Activated B cell treated with CpG ODN at 0.5 μM for 24 hours (primary cell): ENCODE measurements at regions of chr2 and their contacts with region 1.

Region 1: GRCh38 chr2:219177552-219178376 is at the start of gene RETREG2:
- DNase-seq: peak; percentile 78
- ATAC-seq: peak; percentile 45
- H3K4me3 Mint-ChIP-seq: peak within 1 kb of the TSS; percentile 96
- H3K27ac Mint-ChIP-seq: peak within 1 kb of the TSS; percentile 99
- H3K4me1 Mint-ChIP-seq: peaks cover 40% of the 10 kb centered on the region
- H3K27me3 Mint-ChIP-seq: no peaks in the 10 kb centered on the region
- CTCF ChIP-seq: no peak
- total RNA-seq, gene RETREG2: 60.5 and 78.6 TPM in 2 replicates

Region 2: GRCh38 chr2:218568190-218569037 is 609.4 kb before region 1 on chr2 and contains the starts of genes CNOT9 and USP37:
- CTCF ChIA-PET with region 1: no interaction called
- POLR2A ChIA-PET with region 1: interaction called, 7 read pairs
- intact Hi-C with region 1: loop called (anchors 5 kb)
- DNase-seq: peak; percentile 100
- ATAC-seq: peak; percentile 92
- H3K4me3 Mint-ChIP-seq: peak within 1 kb of the TSS; percentile 97
- H3K27ac Mint-ChIP-seq: peak within 1 kb of the TSS; percentile 99
- H3K4me1 Mint-ChIP-seq: peaks cover 45% of the 10 kb centered on the region
- H3K27me3 Mint-ChIP-seq: no peaks in the 10 kb centered on the region
- CTCF ChIP-seq: no peak
- total RNA-seq, gene CNOT9: 60.5 and 74.4 TPM in 2 replicates
- total RNA-seq, gene USP37: 14.3 and 23.1 TPM in 2 replicates

Region 3: GRCh38 chr2:218892693-218893348 is 284.9 kb before region 1 on chr2:
- CTCF ChIA-PET with region 1: no interaction called
- POLR2A ChIA-PET with region 1: interaction called, 9 read pairs
- intact Hi-C with region 1: loop called (anchors 1 kb)
- DNase-seq: peak; percentile 91
- ATAC-seq: peak; percentile 66
- H3K4me3 Mint-ChIP-seq: peak overlapping the region; percentile 80
- H3K27ac Mint-ChIP-seq: peak overlapping the region; percentile 92
- H3K4me1 Mint-ChIP-seq: peaks cover 59% of the 10 kb centered on the region
- H3K27me3 Mint-ChIP-seq: no peaks in the 10 kb centered on the region
- CTCF ChIP-seq: no peak

Region 4: DNA sequence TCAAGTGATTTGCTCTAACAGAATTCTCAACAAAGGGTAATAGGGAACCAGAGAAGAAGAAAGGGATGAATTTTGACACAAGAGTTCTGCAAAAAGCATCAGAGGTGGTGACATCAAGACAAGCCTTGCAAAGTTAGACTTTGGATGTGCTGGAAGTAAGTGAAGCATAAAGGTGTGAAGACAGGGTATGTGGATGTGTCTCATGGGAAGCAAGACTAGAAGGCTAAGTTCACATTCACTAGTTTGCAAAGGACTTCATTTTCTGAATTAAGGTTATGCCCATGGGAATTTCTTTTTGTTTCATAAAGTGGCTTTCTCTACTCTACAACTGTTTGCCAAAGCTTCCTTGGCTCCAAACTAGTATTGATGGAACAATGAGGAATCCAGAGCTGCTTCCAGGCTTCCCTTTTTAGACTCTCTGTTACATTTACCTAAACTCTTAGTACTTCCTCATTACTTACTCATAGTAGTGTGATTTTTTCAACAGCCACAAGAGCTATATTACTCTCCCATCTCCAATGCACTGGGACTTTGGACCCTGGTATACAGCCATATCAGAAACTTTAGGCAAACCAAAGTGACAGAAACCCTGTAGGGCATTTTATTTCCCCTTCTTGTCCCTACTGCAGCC is 95.9 kb before region 1 on chr2:
- CTCF ChIA-PET with region 1: no interaction called
- POLR2A ChIA-PET with region 1: no interaction called
- intact Hi-C with region 1: no loop called
- DNase-seq: no peak
- ATAC-seq: no peak
- H3K4me3 Mint-ChIP-seq: no peak overlapping the region
- H3K27ac Mint-ChIP-seq: no peak overlapping the region
- H3K4me1 Mint-ChIP-seq: peaks cover 13% of the 10 kb centered on the region
- H3K27me3 Mint-ChIP-seq: no peaks in the 10 kb centered on the region
- CTCF ChIP-seq: no peak

Region 5: DNA sequence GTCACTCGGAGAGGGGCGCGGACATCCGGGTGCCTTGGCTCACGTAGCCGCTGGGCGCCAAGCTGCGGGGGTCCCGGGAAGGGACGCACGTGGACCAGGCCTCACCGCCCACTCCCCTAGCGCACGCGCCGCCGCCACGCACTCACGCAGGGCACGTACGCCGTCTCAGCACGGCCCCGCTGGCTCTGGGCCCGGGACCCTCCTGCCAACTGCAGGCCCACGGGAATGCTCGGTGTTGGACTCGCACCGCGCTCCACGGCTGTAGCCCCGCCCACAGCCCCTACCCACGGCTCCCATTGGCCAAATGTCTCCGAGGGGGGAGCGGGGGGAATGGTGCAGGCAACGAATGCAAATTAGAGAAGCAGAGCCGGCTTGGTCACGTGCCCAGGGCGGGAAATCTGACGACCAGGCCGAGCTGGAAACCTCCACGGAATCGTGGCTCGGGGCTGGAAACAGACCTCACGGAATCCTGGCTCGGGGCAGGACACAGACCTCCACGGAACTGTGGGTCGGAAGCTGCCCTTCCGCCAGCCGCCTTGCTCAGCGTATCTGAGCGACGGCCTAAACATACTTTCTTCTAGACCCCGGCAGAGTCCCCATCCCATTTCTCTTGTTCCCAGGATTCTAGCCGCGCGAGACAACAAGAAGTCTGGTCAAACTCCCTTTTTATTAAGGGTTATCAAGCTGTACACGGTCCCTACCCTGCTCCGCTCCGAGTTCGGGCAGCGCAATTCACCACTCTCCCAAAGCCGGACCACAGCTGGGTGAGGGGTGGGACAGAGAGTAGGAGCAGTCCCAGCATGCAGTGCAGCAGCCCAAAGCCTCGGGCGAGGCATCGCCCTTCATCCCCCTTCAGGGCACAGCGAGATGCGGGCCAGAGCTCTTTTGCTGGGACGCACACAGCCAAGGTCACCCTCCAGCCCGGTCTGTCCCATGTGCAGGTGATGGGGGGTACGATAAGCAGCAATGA is 41.3 kb after region 1 on chr2 and contains the start of gene ABCB6:
- CTCF ChIA-PET with region 1: interaction called, 4 read pairs
- POLR2A ChIA-PET with region 1: interaction called, 52 read pairs
- intact Hi-C with region 1: loop called (anchors 1 kb)
- DNase-seq: peak; percentile 82
- ATAC-seq: peak; percentile 95
- H3K4me3 Mint-ChIP-seq: peak within 1 kb of the TSS; percentile 81
- H3K27ac Mint-ChIP-seq: peak within 1 kb of the TSS; percentile 74
- H3K4me1 Mint-ChIP-seq: peaks cover 19% of the 10 kb centered on the region
- H3K27me3 Mint-ChIP-seq: no peaks in the 10 kb centered on the region
- CTCF ChIP-seq: no peak
- total RNA-seq, gene ABCB6: 12.1 and 16.6 TPM in 2 replicates

Region 6: GRCh38 chr2:219278655-219279516 is 101.1 kb after region 1 on chr2 and contains the start of gene DNAJB2:
- CTCF ChIA-PET with region 1: interaction called, 4 read pairs
- POLR2A ChIA-PET with region 1: interaction called, 89 read pairs
- intact Hi-C with region 1: loop called (anchors 1 kb)
- DNase-seq: peak; percentile 99
- ATAC-seq: peak; percentile 78
- H3K4me3 Mint-ChIP-seq: peak within 1 kb of the TSS; percentile 89
- H3K27ac Mint-ChIP-seq: peak within 1 kb of the TSS; percentile 97
- H3K4me1 Mint-ChIP-seq: peaks cover 49% of the 10 kb centered on the region
- H3K27me3 Mint-ChIP-seq: no peaks in the 10 kb centered on the region
- CTCF ChIP-seq: no peak
- total RNA-seq, gene DNAJB2: 59.0 and 71.1 TPM in 2 replicates

Region 7: GRCh38 chr2:219929835-219930234 is 752.1 kb after region 1 on chr2:
- CTCF ChIA-PET with region 1: no interaction called
- POLR2A ChIA-PET with region 1: no interaction called
- intact Hi-C with region 1: no loop called
- DNase-seq: no peak
- ATAC-seq: no peak
- H3K4me3 Mint-ChIP-seq: no peak overlapping the region
- H3K27ac Mint-ChIP-seq: no peak overlapping the region
- H3K4me1 Mint-ChIP-seq: no peaks in the 10 kb centered on the region
- H3K27me3 Mint-ChIP-seq: no peaks in the 10 kb centered on the region
- CTCF ChIP-seq: no peak